Activated T-helper 1 cell treated with anti-CD3 and anti-CD28 coated beads, Interleukin-12 subunit alpha, Interleukin-12 subunit beta, Interleukin-2, Interleukin-4 antibody, amounts not matched to agents 30 ng/mL and 10 ng/mL and 1 ng/mL, durations not matched to agents 14 hours and 24 hours and 36 hours (primary cell): ENCODE measurements at regions of chr3 and their contacts with region 1.

Region 1: DNA sequence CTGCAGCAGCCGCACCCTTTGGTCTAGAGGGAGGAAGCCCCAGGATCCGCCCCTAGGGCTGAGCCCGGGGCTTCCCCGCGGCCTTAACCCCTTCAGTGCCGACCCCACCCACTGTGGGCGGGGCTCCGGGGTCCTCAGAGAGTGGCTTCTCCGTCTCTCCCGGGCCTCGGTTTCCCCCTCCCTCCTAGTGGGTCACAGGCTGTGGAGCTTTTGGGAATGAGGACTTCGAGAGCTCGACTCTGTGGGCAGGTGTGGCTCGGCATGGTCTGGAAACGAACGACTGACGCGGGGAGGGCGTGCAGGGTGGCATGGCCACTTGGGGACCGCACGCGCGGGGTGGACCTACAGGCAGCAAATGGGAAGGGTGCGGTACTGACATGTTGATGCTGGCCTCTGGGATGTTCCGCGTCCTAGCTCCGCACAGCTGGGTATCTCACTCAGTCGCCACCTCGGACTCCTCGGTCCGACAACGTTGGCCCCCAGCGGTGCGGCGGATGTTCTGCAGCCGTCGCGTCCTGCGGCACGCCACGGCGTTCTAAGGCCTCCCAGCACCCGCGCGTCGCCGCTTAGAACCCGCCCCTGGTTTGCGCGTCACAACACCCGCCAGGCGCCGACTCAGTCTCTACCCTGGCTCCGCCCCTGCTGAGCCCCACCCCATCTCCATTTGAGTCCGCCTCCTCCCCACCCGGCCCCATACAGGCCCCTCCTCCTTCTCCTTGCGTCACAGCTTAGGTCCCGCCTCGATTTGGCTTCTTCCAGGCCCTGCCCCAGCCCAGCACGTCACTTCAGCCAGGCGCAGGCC is at the starts of genes HYAL3 and NAA80:
- DNase-seq: peak; percentile 99
- H3K4me3 Mint-ChIP-seq: peak within 1 kb of the TSS; percentile 94
- H3K27ac Mint-ChIP-seq: peak within 1 kb of the TSS; percentile 95
- H3K4me1 Mint-ChIP-seq: peaks cover 15% of the 10 kb centered on the region
- H3K27me3 Mint-ChIP-seq: no peaks in the 10 kb centered on the region
- total RNA-seq, gene HYAL3: 7.9 and 8.0 TPM in 2 replicates
- total RNA-seq, gene NAA80: 18.1 and 19.6 TPM in 2 replicates

Region 2: DNA sequence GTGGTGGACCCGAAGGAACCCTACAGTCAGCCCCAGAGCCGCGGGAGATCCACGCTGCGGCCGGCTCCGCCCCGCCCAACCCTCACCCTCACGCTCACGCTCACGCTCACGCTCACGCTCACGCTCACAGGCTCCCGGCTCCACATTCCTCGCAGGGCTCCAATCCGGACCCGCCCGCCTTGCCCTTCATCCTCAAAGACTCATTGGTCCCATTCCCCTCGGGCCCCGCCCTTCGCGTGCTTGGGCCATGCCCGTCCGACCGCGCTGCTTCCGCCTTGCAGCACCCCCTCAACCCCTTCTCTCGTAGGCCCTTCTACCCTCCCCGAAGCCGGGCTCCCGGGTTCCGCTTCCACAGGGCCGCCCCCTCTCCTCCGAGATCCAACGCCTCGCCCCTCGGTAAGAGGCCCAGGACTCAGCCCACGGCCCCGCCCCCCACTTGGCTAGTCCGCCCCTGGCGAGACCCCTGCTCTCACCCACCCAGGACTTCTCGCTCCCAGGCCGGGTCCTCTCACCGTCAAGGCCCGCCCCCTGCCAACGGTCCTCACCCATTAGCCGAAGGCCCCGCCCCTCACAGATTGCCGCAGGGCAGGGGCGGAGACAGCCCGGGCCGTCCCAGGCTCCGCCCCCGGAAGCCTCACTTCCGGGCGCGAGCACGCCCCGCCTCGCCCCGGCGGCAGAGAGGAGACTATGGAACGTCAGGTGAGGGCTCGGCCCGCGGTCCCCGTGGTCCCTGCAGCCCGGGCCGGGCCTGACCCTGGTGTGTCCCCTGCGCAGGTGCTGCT is 625.1 kb before region 1 on chr3 and contains the start of gene APEH:
- intact Hi-C with region 1: loop called (anchors 5 kb)
- DNase-seq: peak; percentile 96
- H3K4me3 Mint-ChIP-seq: peak within 1 kb of the TSS; percentile 87
- H3K27ac Mint-ChIP-seq: peak within 1 kb of the TSS; percentile 96
- H3K4me1 Mint-ChIP-seq: peaks cover 19% of the 10 kb centered on the region
- H3K27me3 Mint-ChIP-seq: no peaks in the 10 kb centered on the region
- total RNA-seq, gene APEH: 113 and 115 TPM in 2 replicates

Region 3: GRCh38 chr3:49939858-49940666 is 359.0 kb before region 1 on chr3 and contains the start of gene RBM6:
- intact Hi-C with region 1: loop called (anchors 2 kb)
- DNase-seq: peak; percentile 95
- H3K4me3 Mint-ChIP-seq: peak within 1 kb of the TSS; percentile 97
- H3K27ac Mint-ChIP-seq: peak within 1 kb of the TSS; percentile 98
- H3K4me1 Mint-ChIP-seq: peaks cover 22% of the 10 kb centered on the region
- H3K27me3 Mint-ChIP-seq: no peaks in the 10 kb centered on the region
- total RNA-seq, gene RBM6: 99.0 and 100 TPM in 2 replicates

Region 4: GRCh38 chr3:50186096-50186495 is 112.9 kb before region 1 on chr3:
- intact Hi-C with region 1: no loop called
- DNase-seq: no peak
- H3K4me3 Mint-ChIP-seq: no peak overlapping the region
- H3K27ac Mint-ChIP-seq: no peak overlapping the region
- H3K4me1 Mint-ChIP-seq: no peaks in the 10 kb centered on the region
- H3K27me3 Mint-ChIP-seq: no peaks in the 10 kb centered on the region

Region 5: DNA sequence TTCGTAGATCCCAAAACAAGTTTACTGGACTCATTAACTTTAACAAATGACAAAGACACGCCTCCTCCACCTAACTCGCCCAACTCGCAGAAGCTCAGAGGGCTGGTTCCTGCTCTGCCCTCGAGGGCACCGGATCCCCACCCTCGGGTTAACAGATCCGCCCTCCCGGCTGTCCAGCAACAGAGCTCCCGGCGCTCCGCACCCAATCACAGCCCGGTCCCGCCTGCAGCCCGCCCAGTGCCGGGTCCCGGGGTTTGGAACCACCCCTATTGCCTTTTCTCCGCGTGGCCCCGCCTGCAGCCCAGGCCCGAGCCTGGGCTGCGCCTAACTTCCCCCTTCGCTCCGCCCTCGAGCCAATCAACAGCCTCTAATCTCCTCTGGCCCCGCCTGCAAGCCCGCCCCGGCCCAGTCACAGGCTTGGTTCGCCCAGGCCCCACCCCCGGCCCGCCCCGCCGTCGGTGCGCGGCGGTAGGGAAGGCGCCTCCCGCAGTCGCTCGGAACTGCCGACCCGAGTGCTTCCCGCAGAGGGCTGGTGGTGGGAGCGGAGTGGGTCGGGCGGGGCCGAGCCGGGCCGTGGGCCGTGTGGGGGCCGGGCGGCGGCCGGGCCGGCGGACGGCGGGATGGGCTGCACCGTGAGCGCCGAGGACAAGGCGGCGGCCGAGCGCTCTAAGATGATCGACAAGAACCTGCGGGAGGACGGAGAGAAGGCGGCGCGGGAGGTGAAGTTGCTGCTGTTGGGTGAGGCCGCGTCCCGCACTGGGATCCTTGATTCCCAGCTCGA is 63.1 kb before region 1 on chr3 and contains the start of gene GNAI2:
- intact Hi-C with region 1: loop called (anchors 1 kb)
- DNase-seq: peak; percentile 99
- H3K4me3 Mint-ChIP-seq: peak within 1 kb of the TSS; percentile 99
- H3K27ac Mint-ChIP-seq: peak within 1 kb of the TSS; percentile 94
- H3K4me1 Mint-ChIP-seq: peaks cover 32% of the 10 kb centered on the region
- H3K27me3 Mint-ChIP-seq: no peaks in the 10 kb centered on the region
- total RNA-seq, gene GNAI2: 237 and 238 TPM in 2 replicates

Region 6: GRCh38 chr3:50327943-50328691 is 29.1 kb after region 1 on chr3 and contains the start of gene TUSC2:
- intact Hi-C with region 1: loop called (anchors 1 kb)
- DNase-seq: peak; percentile 92
- H3K4me3 Mint-ChIP-seq: peak within 1 kb of the TSS; percentile 93
- H3K27ac Mint-ChIP-seq: peak within 1 kb of the TSS; percentile 88
- H3K4me1 Mint-ChIP-seq: peaks cover 25% of the 10 kb centered on the region
- H3K27me3 Mint-ChIP-seq: no peaks in the 10 kb centered on the region
- total RNA-seq, gene TUSC2: 27.9 and 29.9 TPM in 2 replicates

Region 7: GRCh38 chr3:50358911-50359759 is 60.1 kb after region 1 on chr3 and contains the start of gene TMEM115:
- intact Hi-C with region 1: loop called (anchors 1 kb)
- DNase-seq: peak; percentile 95
- H3K4me3 Mint-ChIP-seq: peak within 1 kb of the TSS; percentile 99
- H3K27ac Mint-ChIP-seq: peak within 1 kb of the TSS; percentile 96
- H3K4me1 Mint-ChIP-seq: peaks cover 43% of the 10 kb centered on the region
- H3K27me3 Mint-ChIP-seq: peaks cover 4% of the 10 kb centered on the region
- total RNA-seq, gene TMEM115: 23.6 and 25.4 TPM in 2 replicates

Region 8: DNA sequence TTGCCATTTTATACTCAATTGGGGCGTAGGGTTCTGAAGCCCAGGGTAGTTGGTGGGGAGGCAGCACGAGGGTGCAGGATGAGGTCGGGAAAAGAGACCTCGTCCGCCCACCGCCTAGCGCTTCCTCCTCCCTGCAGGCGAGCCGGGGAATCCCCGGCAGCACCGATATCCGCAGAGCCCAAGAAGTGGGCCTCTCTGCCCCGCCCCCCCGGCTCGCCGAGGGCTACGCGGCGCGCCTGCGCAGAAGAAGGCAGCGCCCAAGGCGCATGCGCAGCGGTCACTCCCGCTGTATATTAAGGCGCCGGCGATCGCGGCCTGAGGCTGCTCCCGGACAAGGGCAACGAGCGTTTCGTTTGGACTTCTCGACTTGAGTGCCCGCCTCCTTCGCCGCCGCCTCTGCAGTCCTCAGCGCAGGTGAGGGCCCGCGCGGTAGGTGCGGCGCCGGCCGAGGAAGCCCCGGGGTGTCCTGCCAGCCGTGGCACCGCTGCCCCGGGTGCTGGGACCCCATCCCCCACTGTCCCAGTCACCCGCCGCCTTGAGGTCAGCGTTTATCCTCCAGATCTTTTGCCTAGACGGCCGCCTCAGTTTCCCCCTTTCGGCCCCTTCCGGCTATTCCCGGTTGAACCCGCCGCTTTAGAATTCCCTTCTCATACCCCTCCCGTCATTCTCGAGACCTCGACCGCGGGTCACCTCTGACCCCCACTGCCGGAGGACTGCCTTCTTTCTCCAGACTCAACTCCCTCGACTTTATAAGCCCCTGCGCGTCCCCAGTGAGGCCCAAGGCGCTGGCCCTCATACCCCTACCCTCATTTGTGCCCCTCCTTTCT is 1899.0 kb after region 1 on chr3 and contains the start of gene ALAS1:
- intact Hi-C with region 1: loop called (anchors 2 kb)
- DNase-seq: peak; percentile 96
- H3K4me3 Mint-ChIP-seq: peak within 1 kb of the TSS; percentile 100
- H3K27ac Mint-ChIP-seq: peak within 1 kb of the TSS; percentile 94
- H3K4me1 Mint-ChIP-seq: peaks cover 63% of the 10 kb centered on the region
- H3K27me3 Mint-ChIP-seq: peaks cover 2% of the 10 kb centered on the region
- total RNA-seq, gene ALAS1: 105 and 110 TPM in 2 replicates